ENCODE measurements at regions of chr22 and their contacts with region 1.

Region 1: DNA sequence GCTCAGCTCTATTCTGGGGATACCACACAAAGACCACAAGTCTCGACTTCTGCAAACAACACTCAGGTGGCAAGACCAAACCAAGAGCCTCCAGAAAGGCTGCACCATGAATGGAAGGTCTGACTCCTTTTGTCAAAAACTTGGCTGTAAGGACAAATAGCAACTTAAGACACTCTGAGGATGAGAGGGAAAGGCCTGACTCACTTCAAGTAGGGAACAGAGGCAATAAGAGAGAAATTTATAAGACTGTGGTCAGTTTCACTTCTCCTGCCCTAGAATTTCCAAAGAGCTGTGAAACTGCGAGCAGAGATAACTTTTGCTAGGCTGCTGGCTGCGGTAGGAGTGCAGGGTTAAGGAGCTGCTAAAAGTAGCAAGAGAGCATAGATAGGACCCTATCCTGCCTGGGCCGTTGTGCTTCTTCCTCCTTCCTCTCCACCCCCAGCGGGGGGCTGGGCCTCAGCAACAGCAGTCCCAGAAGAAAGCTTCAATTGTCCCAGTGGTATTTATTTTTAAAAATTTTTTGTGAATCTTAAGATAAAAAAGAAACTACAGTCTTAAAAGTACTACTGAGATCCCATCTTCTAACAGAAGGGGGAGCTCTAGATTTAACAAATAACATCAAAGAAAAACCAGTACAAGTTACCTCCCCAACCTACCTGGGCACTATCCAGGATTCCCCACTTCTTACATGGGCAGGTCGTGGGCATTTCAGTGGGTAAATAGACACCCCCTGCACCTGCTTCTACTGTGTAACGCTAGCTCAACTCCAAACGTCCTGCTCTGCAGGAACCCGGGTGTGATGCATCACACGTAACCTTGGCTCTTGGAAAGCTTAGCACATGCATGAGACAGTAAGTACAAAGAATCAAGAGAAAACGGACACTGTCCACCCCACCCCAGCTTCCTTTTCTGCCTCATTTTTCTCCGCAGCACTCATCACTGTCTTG is 66.4 kb downstream of the SGSM3 start:
- DNase-seq: no peak
- H3K4me3 ChIP-seq: no peak overlapping the region
- H3K27ac ChIP-seq: peak overlapping the region; percentile 10
- H3K4me1 ChIP-seq: no peaks in the 10 kb centered on the region
- H3K27me3 ChIP-seq: no peaks in the 10 kb centered on the region
- CTCF ChIP-seq: peak; percentile 46

Region 2: GRCh38 chr22:39825661-39826102 is 611.1 kb before region 1 on chr22:
- intact Hi-C with region 1: no loop called
- DNase-seq: no peak
- H3K4me3 ChIP-seq: no peak overlapping the region
- H3K27ac ChIP-seq: no peak overlapping the region
- H3K4me1 ChIP-seq: no peaks in the 10 kb centered on the region
- H3K27me3 ChIP-seq: peaks cover 9% of the 10 kb centered on the region
- CTCF ChIP-seq: no peak

Region 3: DNA sequence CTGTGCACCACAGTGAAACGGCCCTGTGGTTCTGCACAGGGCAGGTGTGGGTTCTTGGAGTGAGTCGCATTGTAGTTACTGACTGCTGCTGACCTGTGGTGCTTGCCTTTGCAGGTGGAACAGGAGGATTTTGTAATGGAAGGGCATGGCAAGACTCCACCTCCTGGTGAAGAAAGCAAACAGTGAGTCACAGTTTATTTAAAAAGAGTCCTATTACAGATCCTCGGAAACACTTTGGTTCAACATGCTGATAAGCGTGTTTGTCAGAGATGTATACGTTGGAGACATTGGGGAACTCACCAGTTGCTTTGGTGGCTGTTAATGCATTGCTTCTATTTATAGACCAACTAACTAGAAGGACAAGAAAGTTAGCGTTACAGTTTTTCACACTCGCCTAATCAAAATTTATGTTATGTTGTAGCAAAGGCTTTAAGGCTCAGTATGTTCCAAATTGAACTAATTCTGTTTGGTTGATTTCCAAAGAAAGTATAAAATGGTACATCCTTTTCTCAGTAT is 280.7 kb before region 1 on chr22:
- intact Hi-C with region 1: no loop called
- DNase-seq: peak; percentile 79
- H3K4me3 ChIP-seq: no peak overlapping the region
- H3K27ac ChIP-seq: peak overlapping the region; percentile 75
- H3K4me1 ChIP-seq: peaks cover 4% of the 10 kb centered on the region
- H3K27me3 ChIP-seq: no peaks in the 10 kb centered on the region
- CTCF ChIP-seq: peak; percentile 18

Region 4: DNA sequence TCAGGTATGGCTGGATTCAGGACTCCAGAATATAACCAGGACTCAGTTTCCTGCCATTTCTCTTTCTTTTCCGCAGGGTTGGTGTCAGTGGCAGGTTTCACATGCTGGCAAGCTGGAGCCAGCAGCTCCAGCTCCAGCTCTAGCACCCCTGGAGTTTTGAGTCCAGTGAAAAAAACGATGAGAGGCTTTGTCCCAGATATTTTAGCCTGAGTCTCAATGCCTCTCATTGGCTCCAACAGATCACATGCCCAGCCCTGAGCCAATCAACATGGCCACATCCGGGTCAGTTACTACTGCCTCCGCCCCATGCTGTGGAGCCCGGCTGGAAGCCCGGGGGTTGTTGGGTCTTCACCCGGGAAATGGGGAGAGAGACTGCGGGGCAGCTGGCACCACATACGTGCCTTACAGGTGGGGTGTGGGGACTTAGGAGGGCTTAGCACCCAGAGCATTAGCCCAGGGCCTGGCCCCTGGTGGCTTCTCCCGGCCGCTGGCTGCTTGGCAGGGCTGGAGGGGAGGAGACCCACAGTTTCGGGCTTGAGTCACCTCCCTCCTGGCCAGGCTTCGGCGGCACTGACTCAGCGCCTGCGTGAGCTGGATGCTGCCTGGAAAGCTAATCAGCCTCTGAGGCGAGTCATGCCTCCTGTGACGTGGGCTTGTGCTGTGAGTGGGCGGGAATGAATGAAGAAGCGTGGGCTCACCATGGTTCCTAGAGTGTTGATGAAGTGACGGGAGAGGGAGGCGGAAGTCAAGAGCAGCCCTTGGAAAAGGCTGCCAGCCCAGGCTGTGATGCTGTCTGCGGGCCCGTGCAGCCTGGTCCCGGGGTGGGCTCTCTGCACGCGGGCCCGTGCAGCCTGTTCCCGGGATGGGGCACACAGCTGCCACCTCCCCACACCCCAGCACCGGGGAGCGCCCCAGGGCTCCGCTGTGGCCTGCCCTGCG is 215.1 kb after region 1 on chr22:
- intact Hi-C with region 1: loop called (anchors 2 kb)
- DNase-seq: peak; percentile 84
- H3K4me3 ChIP-seq: peak overlapping the region; percentile 41
- H3K27ac ChIP-seq: peak overlapping the region; percentile 89
- H3K4me1 ChIP-seq: no peaks in the 10 kb centered on the region
- H3K27me3 ChIP-seq: no peaks in the 10 kb centered on the region
- CTCF ChIP-seq: no peak

Region 5: DNA sequence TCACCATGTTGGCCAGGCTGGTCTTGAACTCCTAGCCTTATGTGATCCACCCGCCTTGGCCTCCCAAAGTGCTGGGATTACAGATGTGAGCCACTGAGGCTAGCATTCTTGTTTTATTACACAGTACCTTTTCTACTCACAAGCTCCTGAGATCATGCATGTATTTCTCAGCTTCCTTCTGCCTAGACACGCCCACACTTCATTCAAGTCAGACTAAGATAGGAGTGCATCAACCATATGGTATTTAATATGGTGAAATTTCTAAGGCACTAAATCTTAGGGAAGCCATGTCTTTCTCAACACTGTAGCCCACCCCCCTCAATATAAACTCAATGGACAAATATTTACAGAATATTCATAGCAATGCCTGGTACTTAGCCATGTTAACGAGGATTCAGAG is 320.3 kb after region 1 on chr22:
- intact Hi-C with region 1: loop called (anchors 10 kb)
- DNase-seq: no peak
- H3K4me3 ChIP-seq: no peak overlapping the region
- H3K27ac ChIP-seq: no peak overlapping the region
- H3K4me1 ChIP-seq: no peaks in the 10 kb centered on the region
- H3K27me3 ChIP-seq: no peaks in the 10 kb centered on the region
- CTCF ChIP-seq: no peak

Region 6: DNA sequence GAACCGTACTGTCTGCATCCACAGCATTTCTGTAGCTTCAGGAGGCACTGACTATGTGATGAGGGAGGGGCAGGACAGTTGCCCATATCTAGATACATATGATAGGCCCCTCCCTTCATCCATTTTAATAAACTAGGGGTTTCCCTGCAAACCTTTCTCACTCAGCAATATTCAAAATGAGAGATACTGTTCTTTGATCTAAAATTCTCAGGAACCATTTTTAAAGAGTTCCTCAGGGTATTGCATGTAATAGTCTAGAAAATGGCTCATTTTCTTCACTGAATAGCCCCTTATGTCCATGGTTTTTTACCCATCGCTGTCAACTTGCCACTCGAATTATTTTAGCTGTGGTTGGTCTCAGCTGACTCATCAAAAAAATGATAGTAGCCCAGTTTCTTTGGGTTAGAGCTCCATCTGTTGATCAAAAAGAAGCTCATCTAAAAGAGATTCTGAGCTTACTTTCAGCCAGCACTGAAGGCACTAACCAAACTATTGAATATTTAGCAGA is 462.1 kb after region 1 on chr22:
- intact Hi-C with region 1: loop called (anchors 10 kb)
- DNase-seq: no peak
- H3K4me3 ChIP-seq: no peak overlapping the region
- H3K27ac ChIP-seq: no peak overlapping the region
- H3K4me1 ChIP-seq: no peaks in the 10 kb centered on the region
- H3K27me3 ChIP-seq: no peaks in the 10 kb centered on the region
- CTCF ChIP-seq: peak; percentile 27

Measured in colonic mucosa (tissue), 4 donors.